A549 (cell line): ENCODE measurements at regions of chr1 and their contacts with region 1.

Region 1: GRCh38 chr1:214584805-214585766 is 17.9 kb upstream of the CENPF start:
- DNase-seq: peak; percentile 41 to 58
- ATAC-seq: peak; percentile 83 to 89
- H3K4me3 ChIP-seq: no peak overlapping the region
- H3K27ac ChIP-seq: peak overlapping the region; percentile 31 to 74; a peak in 4 of 6 replicates
- H3K4me1 ChIP-seq: peaks cover 38% of the 10 kb centered on the region
- CTCF ChIP-seq: peak; percentile 97
- EP300 ChIP-seq: no peak
- POLR2A ChIP-seq: no peak
- RAD21 ChIP-seq: peak; percentile 97

Region 2: DNA sequence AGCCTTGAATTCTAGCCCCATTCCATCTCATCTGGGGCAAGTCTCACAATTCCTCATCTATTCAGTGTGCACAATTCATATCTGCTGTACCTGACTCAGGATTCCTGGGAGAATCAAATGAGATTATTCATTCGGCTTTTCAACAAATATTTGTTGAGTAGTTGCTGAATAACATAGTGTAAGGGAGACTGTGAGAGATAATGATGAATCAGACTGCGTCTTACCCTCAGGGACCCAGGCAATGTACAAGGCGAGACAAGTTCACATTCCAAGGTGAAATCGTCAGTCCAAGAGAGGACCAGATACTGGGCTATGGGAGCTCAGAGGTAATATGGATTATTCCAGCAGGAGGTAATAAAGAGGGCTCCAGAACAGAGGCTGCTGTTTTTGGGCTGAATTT is 371.9 kb before region 1 on chr1:
- CTCF ChIA-PET with region 1: interaction called, 20 read pairs
- POLR2A ChIA-PET with region 1: no interaction called
- DNase-seq: peak; percentile 52 to 84
- ATAC-seq: peak; percentile 94 to 95
- H3K4me3 ChIP-seq: no peak overlapping the region
- H3K27ac ChIP-seq: peak overlapping the region; percentile 74
- H3K4me1 ChIP-seq: peaks cover 52% of the 10 kb centered on the region
- CTCF ChIP-seq: no peak
- EP300 ChIP-seq: peak in 1 of 2 experiments; percentile 36; a peak in 1 of 5 replicates
- POLR2A ChIP-seq: no peak
- RAD21 ChIP-seq: no peak

Region 3: GRCh38 chr1:214360525-214361164 is 224.4 kb before region 1 on chr1:
- CTCF ChIA-PET with region 1: interaction called, 15 read pairs
- POLR2A ChIA-PET with region 1: no interaction called
- DNase-seq: no peak
- ATAC-seq: no peak
- H3K4me3 ChIP-seq: no peak overlapping the region
- H3K27ac ChIP-seq: no peak overlapping the region
- H3K4me1 ChIP-seq: no peaks in the 10 kb centered on the region
- CTCF ChIP-seq: no peak
- EP300 ChIP-seq: no peak
- POLR2A ChIP-seq: no peak
- RAD21 ChIP-seq: no peak

Region 4: DNA sequence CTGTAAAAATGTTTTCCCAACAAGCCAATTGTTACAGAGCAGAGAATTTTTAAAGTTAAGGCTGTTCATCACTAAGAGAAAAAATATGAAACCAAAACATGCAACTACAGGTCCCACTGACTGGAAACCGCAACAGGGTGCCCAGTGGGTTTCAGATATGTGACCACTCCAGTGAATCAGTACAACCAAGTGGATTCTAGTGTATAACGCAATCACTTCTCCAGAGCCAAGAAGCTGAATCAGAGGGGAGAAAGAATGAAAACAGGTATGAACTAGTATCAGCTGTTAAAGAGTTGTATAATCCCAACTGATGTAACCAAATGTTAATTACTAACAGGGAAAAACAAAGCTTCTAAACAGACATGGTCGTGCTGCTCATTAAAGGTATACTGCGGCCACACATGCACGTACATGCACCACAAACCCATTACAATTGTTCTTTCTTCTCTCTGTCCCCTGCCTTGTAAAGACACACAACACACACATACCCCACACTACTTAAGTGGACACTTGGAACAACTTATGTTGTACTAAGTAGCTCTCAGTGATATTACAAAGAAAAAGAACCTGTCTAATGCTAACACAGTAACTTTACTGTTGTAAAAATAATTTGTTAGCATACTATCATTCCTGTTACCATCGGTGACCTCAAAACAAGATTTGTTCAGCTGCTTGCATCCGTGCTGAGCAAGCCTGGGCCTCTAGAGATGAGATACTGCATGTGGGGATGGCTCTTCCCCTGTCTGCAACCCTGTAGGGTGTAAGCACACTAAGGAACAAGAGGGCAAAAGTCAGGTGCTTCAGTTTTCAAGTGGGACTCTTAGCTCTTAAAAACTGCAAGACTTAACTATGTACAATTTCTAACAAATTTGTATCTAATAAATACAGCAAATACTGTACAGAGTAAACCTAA is 107.9 kb before region 1 on chr1:
- CTCF ChIA-PET with region 1: interaction called, 10 read pairs
- POLR2A ChIA-PET with region 1: no interaction called
- DNase-seq: no peak
- ATAC-seq: peak in 1 of 2 experiments; percentile 33; a peak in 2 of 6 replicates
- H3K4me3 ChIP-seq: no peak overlapping the region
- H3K27ac ChIP-seq: peak overlapping the region in 1 of 2 experiments; percentile 52; a peak in 3 of 6 replicates
- H3K4me1 ChIP-seq: peaks cover 66% of the 10 kb centered on the region
- CTCF ChIP-seq: no peak
- EP300 ChIP-seq: no peak
- POLR2A ChIP-seq: no peak
- RAD21 ChIP-seq: no peak

Region 5: GRCh38 chr1:214520590-214521037 is 64.5 kb before region 1 on chr1:
- CTCF ChIA-PET with region 1: no interaction called
- POLR2A ChIA-PET with region 1: no interaction called
- DNase-seq: no peak
- ATAC-seq: no peak
- H3K4me3 ChIP-seq: no peak overlapping the region
- H3K27ac ChIP-seq: no peak overlapping the region
- H3K4me1 ChIP-seq: peaks cover 37% of the 10 kb centered on the region
- CTCF ChIP-seq: no peak
- EP300 ChIP-seq: no peak
- POLR2A ChIP-seq: no peak
- RAD21 ChIP-seq: no peak

Region 6: GRCh38 chr1:214566158-214567104 is 18.7 kb before region 1 on chr1:
- CTCF ChIA-PET with region 1: interaction called, 120 read pairs
- POLR2A ChIA-PET with region 1: no interaction called
- DNase-seq: peak; percentile 54 to 66
- ATAC-seq: peak; percentile 85 to 89
- H3K4me3 ChIP-seq: no peak overlapping the region
- H3K27ac ChIP-seq: peak overlapping the region; percentile 56 to 77
- H3K4me1 ChIP-seq: peaks cover 72% of the 10 kb centered on the region
- CTCF ChIP-seq: no peak
- EP300 ChIP-seq: peak in 1 of 2 experiments; percentile 52; a peak in 1 of 5 replicates
- POLR2A ChIP-seq: no peak
- RAD21 ChIP-seq: peak in 1 of 2 experiments; percentile 18; a peak in 1 of 5 replicates

Region 7: GRCh38 chr1:214764537-214764936 is 179.5 kb after region 1 on chr1:
- CTCF ChIA-PET with region 1: no interaction called
- POLR2A ChIA-PET with region 1: no interaction called
- DNase-seq: no peak
- ATAC-seq: no peak
- H3K4me3 ChIP-seq: no peak overlapping the region
- H3K27ac ChIP-seq: no peak overlapping the region
- H3K4me1 ChIP-seq: no peaks in the 10 kb centered on the region
- CTCF ChIP-seq: no peak
- EP300 ChIP-seq: no peak
- POLR2A ChIP-seq: no peak
- RAD21 ChIP-seq: no peak